CD4-positive, alpha-beta T cell (primary cell): ENCODE measurements at regions of chr20 and their contacts with region 1.

Region 1: DNA sequence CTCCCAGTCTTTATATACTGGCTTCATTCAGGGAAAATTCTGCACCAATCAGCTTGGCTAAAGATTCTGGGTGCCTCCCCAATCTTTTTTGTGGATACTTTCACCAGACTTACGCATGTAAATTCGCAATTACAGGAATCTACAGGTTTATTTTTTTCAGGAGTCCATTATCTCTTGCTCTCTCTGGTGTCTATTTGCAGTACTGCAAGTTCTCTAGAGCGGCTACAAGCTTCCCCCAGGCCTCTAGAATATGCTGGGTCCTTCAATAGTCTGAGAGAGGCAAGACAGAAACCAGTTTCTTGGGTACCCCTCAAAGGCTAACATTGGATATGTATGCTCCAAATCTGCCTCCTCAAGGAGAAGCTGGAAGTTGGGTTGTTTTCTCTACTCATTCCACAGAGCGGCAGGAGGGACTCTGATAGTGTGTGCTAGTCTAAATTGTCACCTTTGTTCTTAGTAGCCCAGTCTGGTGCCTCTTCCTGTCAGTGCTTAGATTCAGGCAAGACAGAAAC is 58.5 kb downstream of the SUN5 start:
- DNase-seq: peak in 5 of 14 experiments; percentile 7 to 72 (median 50)
- ATAC-seq: peak; percentile 93
- H3K4me3 ChIP-seq: no peak overlapping the region
- H3K4me3 Mint-ChIP-seq: peak overlapping the region; percentile 30
- H3K27ac ChIP-seq: peak overlapping the region in 1 of 2 donors; percentile 0
- H3K27ac Mint-ChIP-seq: peak overlapping the region; percentile 88
- H3K4me1 ChIP-seq: peaks cover 18% of the 10 kb centered on the region
- H3K4me1 Mint-ChIP-seq: peaks cover 42% of the 10 kb centered on the region
- H3K27me3 ChIP-seq: no peaks in the 10 kb centered on the region
- H3K27me3 Mint-ChIP-seq: no peaks in the 10 kb centered on the region
- CTCF ChIP-seq: peak; percentile 73

Region 2: DNA sequence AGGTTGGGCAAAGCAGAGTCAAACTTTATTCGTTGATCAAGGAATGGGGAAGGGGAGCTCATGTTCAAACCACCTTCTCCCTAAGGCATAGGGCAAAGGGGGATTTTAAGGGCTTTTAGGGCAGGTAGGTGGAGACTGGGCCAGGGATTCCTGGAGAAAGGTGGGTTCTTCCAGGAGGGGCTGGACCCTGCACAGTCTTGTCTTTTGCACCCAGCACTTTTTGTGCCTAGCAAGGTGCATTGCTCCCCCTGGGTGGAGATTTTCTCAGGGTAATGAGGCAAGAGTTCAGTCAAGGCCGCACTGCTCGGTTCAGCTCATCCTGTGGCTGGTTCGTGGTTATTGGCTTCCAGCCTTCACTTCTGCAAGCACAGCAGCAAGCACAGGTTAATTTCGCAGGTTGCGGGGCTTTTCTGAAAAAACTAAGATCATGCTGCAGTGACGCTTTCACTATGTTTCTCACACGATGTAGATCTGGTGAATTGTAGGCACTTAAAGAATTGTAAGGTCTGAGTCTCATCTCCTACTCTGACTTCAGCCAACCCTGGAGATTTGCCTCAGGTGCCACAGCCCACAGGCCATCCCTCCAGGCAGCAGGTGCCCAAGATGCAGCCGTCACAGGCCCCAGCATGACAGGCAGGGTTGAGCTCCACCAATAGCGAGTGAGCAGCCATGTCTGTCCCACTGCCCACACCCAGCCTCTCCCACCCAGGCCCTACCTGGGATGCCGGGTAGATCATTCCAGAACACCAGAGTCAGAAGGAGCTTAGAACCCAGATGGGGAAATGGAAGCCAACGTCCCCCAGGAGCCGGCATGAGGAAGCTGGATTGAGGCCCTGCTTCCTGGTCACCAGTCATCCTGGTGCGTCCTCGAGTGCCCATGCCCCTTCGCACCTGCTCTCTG is 21.4 kb after region 1 on chr20:
- CTCF ChIA-PET with region 1: interaction called, 10 read pairs
- POLR2A ChIA-PET with region 1: interaction called, 31 read pairs
- intact Hi-C with region 1: loop called in 1 of 2 experiments (anchors 1 kb)
- DNase-seq: peak; percentile 35 to 91 (median 52)
- ATAC-seq: peak; percentile 38
- H3K4me3 ChIP-seq: no peak overlapping the region
- H3K4me3 Mint-ChIP-seq: peak overlapping the region; percentile 85
- H3K27ac ChIP-seq: peak overlapping the region; percentile 87 to 98
- H3K27ac Mint-ChIP-seq: no peak overlapping the region
- H3K4me1 ChIP-seq: peaks cover 90% of the 10 kb centered on the region
- H3K4me1 Mint-ChIP-seq: peaks cover 85% of the 10 kb centered on the region
- H3K27me3 ChIP-seq: no peaks in the 10 kb centered on the region
- H3K27me3 Mint-ChIP-seq: no peaks in the 10 kb centered on the region
- CTCF ChIP-seq: no peak

Region 3: DNA sequence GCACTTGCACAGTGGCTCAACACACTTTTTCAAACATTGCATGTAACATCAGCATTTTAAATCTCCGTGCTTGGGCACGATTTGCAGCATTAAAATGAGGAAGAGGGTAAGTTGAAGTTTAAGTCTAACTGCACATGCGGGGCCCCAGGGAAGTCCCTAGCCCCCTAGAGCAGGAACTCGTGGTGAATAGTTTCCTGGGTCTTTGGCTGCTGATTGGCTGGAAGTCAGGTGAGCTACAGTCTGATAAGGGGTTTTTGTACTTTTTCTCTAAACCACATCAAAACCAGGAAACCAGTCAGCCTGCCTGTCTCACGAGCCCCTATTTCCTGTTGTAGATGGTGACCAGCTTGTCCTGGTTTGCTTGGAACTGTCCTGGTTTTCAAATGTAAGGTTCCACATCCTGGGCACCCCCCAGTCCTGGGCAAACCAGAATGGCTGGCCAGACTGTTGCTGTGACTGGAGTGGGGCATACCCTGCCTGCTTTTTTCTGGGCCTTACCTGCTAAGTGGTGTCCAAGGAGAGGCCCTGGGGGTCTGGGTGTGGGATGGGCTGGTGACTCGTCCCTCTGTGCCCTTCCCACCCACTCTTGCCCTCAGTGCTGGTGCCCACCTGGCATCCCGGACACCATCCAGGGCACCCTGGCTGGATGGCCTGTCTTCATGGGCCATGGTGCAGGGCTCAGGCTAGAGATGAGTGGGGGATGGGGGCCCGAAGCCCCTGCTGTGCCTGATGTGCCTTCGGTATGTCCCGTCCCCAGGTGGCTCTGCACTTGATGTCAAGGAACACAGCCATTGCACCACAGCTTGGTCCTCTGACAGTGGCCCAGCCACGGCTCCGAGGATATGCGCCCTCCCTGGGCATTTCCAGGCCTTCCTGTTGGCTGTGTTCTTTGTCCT is 26.7 kb after region 1 on chr20:
- CTCF ChIA-PET with region 1: interaction called, 9 read pairs
- POLR2A ChIA-PET with region 1: interaction called, 31 read pairs
- intact Hi-C with region 1: loop called in 1 of 2 experiments (anchors 1 kb)
- DNase-seq: peak; percentile 58 to 97 (median 76)
- ATAC-seq: peak; percentile 66
- H3K4me3 ChIP-seq: peak overlapping the region; percentile 19
- H3K4me3 Mint-ChIP-seq: peak overlapping the region; percentile 61
- H3K27ac ChIP-seq: peak overlapping the region; percentile 87 to 98
- H3K27ac Mint-ChIP-seq: no peak overlapping the region
- H3K4me1 ChIP-seq: peaks cover 99% of the 10 kb centered on the region
- H3K4me1 Mint-ChIP-seq: peaks cover 43% of the 10 kb centered on the region
- H3K27me3 ChIP-seq: no peaks in the 10 kb centered on the region
- H3K27me3 Mint-ChIP-seq: no peaks in the 10 kb centered on the region
- CTCF ChIP-seq: no peak

Region 4: DNA sequence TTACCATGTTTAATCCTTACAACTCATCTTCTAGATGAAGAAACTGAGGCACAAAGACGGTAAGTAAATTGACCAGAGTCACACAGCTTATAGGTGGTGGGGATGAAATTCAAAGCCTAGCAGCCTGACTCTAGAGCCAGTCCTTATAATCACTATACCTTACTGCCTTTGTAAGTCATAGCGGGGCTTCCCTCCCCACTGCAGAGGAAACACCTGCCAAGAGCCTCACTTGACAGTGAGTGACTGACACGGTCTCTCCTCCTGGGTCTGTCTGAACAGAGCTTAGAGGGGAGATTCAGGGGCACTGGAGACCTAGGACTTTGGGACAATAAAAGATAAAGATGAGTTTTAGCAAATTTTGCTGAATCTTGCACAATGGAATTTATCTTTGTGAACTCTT is 45.6 kb after region 1 on chr20:
- CTCF ChIA-PET with region 1: interaction called, 5 read pairs
- POLR2A ChIA-PET with region 1: no interaction called
- intact Hi-C with region 1: loop called (anchors 5 to 10 kb)
- DNase-seq: peak in 2 of 14 experiments; percentile 17 to 54
- ATAC-seq: peak; percentile 62
- H3K4me3 ChIP-seq: no peak overlapping the region
- H3K4me3 Mint-ChIP-seq: no peak overlapping the region
- H3K27ac ChIP-seq: no peak overlapping the region
- H3K27ac Mint-ChIP-seq: peak overlapping the region; percentile 66
- H3K4me1 ChIP-seq: peaks cover 25% of the 10 kb centered on the region
- H3K4me1 Mint-ChIP-seq: peaks cover 41% of the 10 kb centered on the region
- H3K27me3 ChIP-seq: no peaks in the 10 kb centered on the region
- H3K27me3 Mint-ChIP-seq: no peaks in the 10 kb centered on the region
- CTCF ChIP-seq: no peak

Region 5: DNA sequence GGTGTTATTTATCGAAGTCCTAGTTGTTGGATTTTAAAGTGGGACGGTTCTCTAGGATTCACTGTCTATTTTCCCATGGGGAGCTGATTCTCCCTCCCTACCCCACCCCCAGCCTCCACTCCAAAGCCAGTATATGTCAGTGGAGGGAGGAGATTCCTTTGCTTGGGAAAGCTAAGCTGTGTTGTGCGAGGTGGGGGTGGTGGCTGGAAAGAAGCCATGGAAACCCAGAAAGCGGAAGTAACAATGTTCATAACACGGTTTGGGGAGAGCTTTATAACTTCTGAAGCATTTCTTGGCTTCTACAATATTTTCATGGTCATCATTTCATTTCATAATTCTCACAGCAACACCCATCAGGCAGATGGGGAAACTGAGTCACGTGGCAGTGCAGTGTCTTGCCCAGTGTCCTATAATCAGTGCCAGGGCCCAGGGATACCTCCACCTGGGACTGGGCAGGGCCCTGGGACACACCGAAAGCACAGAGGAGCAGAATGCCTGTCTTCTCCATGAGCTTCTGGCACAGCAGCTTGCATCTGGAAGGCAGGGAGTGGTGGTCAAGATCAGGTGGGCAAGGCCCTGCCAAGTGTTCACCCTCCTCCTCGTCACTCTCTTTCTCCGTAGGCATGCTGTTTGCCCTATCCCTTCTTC is 54.0 kb after region 1 on chr20:
- CTCF ChIA-PET with region 1: interaction called, 11 read pairs
- POLR2A ChIA-PET with region 1: interaction called, 5 read pairs
- intact Hi-C with region 1: loop called (anchors 5 to 10 kb)
- DNase-seq: no peak
- ATAC-seq: no peak
- H3K4me3 ChIP-seq: no peak overlapping the region
- H3K4me3 Mint-ChIP-seq: no peak overlapping the region
- H3K27ac ChIP-seq: no peak overlapping the region
- H3K27ac Mint-ChIP-seq: no peak overlapping the region
- H3K4me1 ChIP-seq: peaks cover 20% of the 10 kb centered on the region
- H3K4me1 Mint-ChIP-seq: peaks cover 50% of the 10 kb centered on the region
- H3K27me3 ChIP-seq: no peaks in the 10 kb centered on the region
- H3K27me3 Mint-ChIP-seq: no peaks in the 10 kb centered on the region
- CTCF ChIP-seq: no peak

Region 6: DNA sequence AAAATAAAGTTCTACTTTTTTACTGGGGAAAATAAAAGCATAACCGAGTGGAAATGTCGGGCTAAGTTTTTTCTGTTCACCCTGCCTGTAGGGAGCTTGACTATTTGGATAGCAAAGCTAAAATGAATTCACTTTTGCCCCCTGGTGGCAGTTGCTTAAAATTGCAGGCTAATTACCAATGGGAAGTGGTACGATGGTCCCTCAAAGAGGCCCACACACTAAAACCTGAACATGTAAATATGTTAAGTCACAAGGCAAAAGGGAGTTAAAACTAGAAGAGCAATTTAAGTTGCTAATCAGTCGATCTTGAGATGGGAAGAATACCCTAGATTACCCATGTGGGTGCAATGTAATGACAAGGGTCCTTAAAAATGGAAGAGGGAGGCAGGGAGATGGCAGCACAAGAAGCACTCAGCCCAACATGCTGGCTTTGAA is 59.4 kb after region 1 on chr20:
- CTCF ChIA-PET with region 1: interaction called, 11 read pairs
- POLR2A ChIA-PET with region 1: interaction called, 5 read pairs
- intact Hi-C with region 1: no loop called
- DNase-seq: peak in 4 of 14 experiments; percentile 43 to 66 (median 61)
- ATAC-seq: no peak
- H3K4me3 ChIP-seq: no peak overlapping the region
- H3K4me3 Mint-ChIP-seq: no peak overlapping the region
- H3K27ac ChIP-seq: no peak overlapping the region
- H3K27ac Mint-ChIP-seq: peak overlapping the region; percentile 35
- H3K4me1 ChIP-seq: peaks cover 18% of the 10 kb centered on the region
- H3K4me1 Mint-ChIP-seq: peaks cover 37% of the 10 kb centered on the region
- H3K27me3 ChIP-seq: no peaks in the 10 kb centered on the region
- H3K27me3 Mint-ChIP-seq: no peaks in the 10 kb centered on the region
- CTCF ChIP-seq: peak; percentile 65